Naive thymus-derived CD8-positive, alpha-beta T cell (primary cell): ENCODE measurements at regions of chr19 and their contacts with region 1.

Region 1: DNA sequence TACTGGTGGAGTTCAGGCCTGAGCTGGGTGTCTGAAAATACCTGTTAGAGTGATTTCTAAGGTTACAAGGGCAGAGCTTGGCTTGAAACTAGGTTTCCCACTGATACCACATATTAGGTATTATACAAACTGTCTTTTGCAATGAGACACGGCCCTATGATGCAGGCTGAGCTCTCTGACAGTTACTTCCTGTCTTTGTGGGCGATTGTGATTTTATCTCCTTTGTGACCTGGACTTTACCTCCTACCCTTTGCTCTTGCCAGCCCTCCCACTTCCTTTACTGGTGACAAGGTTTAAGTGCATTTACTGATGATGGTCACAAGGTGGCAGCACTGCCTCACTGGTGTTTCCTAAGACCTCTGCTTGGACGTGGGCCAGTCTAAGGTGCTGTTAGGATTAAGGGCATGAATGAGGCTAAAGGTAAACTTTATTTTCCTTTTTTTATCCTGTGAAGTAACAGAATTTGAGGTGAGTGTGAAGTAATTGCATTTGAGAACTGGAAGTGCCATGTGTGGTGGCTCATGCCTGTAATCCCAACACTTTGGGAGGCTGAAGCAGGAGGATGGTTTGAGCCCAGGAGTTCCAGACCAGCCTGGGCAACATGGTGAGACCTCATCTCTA is 7.7 kb upstream of the CXCL17 start:
- DNase-seq: peak; percentile 58 to 88 (median 81)
- ATAC-seq: peak; percentile 97 to 98
- H3K4me3 Mint-ChIP-seq: no peak overlapping the region
- H3K27ac Mint-ChIP-seq: no peak overlapping the region
- H3K4me1 Mint-ChIP-seq: peaks cover 0 to 15% (median 5%) of the 10 kb centered on the region in 4 donors
- H3K27me3 Mint-ChIP-seq: no peaks in the 10 kb centered on the region

Region 2: DNA sequence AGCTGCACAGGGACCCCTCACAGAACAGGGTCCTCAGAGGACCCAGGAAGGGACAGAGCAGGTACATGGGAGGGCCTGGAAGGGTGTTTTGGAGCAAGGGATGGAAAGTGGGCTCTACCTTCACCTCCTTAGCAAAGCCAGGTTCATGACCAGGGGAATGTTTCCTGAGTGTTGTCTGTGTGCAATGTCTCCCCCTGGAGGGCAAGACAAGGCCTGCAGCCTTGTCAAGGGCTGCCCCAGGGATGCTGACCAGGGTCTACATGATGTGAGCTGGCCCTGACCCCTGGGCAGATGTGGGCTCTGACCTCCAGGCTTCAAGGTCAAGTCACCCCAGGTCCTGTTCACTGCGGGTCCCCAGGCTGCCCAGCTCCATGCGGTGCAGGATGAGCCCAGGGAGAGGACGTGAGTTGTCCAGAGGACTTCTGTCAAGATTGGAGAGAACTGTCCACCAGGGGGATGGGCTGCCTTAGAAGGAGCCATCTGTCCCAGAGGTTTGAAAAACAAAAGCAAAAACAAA is 78.9 kb after region 1 on chr19:
- POLR2A ChIA-PET with region 1: interaction called, 13 read pairs
- DNase-seq: peak; percentile 49 to 80 (median 62)
- ATAC-seq: peak; percentile 81 to 90
- H3K4me3 Mint-ChIP-seq: peak overlapping the region; percentile 73 to 91 (median 87)
- H3K27ac Mint-ChIP-seq: peak overlapping the region; percentile 77 to 97 (median 89)
- H3K4me1 Mint-ChIP-seq: peaks cover 25 to 45% (median 34%) of the 10 kb centered on the region in 4 donors
- H3K27me3 Mint-ChIP-seq: no peaks in the 10 kb centered on the region